ENCODE measurements at regions of chr5 and their contacts with region 1.

Region 1: DNA sequence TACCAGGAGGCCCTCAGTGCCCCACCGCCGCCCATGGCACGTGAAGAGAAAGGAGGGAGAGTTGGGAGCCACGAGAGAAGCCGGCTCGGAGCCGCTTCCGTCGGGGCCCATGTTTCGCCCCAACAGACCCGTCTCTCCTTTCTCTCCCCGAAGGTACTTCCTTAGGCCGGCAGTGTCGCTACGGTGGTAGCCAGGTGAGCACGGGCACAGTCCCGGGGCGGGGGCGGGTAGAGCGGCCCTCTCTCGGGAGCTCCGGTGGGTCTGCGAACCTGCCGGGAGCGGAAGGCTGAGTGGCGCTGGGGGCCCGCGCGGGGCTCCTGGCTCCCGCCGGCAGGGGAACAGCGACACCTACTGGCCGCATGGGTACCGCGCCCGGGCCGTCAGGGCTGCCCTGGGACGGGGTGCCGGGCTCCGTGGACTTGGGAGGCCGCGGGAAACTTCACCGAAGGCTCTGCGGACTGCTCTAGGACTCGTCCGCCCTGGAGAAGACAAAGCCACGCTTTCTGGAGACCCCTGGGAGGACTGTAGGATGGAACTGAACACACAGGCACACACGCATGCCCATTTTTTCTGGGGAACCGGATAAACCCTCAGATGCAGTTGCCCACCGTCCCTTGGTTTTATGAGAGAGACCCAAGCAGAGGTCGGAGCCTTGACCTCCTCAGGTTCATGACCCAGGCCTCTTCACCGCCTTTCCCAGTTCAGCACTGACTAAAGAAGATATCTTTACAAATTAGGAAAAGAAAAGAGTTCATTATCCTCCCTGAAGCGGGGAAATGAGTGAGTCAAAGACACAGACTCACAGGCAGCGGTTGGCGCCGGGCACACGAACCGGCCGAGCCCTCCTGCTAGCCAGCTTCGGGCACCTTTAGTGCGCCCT is 202.5 kb downstream of the MEF2C start:
- DNase-seq: peak; percentile 71 to 80
- ATAC-seq: peak; percentile 86 to 91 (median 88)
- H3K4me3 ChIP-seq: peak overlapping the region; percentile 48
- H3K27ac ChIP-seq: no peak overlapping the region
- H3K4me1 ChIP-seq: peaks cover 11% of the 10 kb centered on the region
- H3K27me3 ChIP-seq: peaks cover 6 to 100% (median 47%) of the 10 kb centered on the region in 3 donors
- CTCF ChIP-seq: peak; percentile 95

Region 2: DNA sequence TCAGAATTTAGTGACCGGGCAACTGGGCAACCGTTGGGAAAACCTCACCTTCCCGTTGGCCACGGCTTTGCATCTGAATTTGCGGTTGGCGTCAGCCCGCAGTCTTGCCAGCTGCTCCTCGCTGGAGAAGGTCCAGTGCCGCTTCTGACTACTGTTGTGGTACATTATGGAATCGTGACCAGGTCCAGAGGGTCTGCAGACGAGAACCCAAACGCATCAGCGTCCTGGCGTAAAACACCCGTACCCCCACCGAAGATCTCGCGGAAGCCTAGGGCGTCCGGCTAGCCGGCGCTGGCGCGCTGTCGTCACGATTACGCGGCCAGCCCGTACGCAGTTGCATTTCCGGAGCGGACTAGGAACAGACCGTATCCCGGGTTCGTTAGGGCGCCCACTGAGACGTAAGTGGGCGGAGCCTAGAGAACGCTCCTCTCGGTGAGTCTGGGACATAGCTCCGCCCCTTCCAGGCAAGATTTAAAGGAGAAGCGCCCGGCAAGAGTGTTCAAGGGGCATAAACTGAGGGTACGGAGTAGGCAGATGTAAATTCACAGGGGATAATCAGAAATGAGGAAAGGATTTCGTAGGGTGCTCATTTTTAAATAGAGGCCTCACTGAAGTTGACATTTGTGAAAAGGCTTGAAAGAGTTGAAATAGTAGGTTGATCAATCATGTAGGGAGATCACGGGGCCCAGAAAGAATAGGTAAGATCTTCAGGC is 1267.7 kb before region 1 on chr5 and contains the start of gene CCNH:
- intact Hi-C with region 1: loop called in 1 of 2 experiments (anchors 10 kb)
- DNase-seq: peak; percentile 98
- ATAC-seq: peak; percentile 97 to 99 (median 98)
- H3K4me3 ChIP-seq: peak within 1 kb of the TSS; percentile 91
- H3K27ac ChIP-seq: peak within 1 kb of the TSS; percentile 98
- H3K4me1 ChIP-seq: peaks cover 20% of the 10 kb centered on the region
- H3K27me3 ChIP-seq: no peaks in the 10 kb centered on the region
- CTCF ChIP-seq: no peak
- total RNA-seq, gene CCNH: 19.9 to 41.9 (median 31.4) TPM

Region 3: DNA sequence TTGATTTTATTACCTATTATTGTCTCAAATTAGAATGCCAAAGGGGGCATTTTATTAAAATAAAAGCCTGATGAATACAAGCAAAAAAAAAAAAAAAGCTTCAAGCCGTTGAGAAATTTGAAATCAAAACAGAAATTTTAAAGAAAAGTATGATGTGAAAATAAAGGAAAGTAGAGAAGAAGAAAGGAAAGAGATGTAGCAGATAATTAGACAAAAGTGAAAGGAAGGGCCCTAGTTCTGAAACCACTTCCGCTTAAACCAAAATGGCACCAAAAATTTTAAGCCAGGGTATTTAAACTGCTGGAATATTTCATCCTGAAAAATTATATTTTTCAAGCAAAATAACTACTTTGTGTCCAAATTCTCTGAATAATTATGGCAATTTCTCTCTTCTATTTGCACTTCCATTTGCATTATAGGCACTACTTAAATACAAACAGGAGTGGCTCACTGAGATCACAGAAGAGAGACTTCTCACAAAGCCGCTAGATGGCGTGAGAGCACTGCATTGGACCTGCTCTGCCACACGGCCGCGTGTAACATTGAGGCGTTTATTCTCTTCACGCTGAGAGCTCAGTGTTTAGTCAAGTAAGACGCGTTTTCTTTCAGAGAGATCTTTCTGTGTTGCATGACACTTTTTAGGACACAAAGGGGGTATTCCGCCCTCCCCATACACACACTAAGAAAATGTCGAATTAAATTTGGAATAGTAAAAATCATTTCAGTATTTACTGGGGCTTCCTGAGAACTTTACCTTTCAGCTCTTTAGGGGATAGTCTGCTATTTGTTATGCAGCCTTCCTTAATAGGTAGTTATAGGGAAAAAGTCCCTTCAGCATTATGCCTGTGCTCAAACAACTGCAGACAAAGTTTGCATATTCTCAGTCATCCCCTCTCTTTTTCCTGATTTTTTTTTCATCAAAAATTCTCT is 899.4 kb before region 1 on chr5:
- intact Hi-C with region 1: loop called (anchors 2 to 5 kb)
- DNase-seq: peak; percentile 62 to 87
- ATAC-seq: peak; percentile 87 to 99 (median 93)
- H3K4me3 ChIP-seq: no peak overlapping the region
- H3K27ac ChIP-seq: no peak overlapping the region
- H3K4me1 ChIP-seq: no peaks in the 10 kb centered on the region
- H3K27me3 ChIP-seq: peaks cover 0 to 12% (median 0%) of the 10 kb centered on the region in 3 donors
- CTCF ChIP-seq: peak; percentile 94

Region 4: DNA sequence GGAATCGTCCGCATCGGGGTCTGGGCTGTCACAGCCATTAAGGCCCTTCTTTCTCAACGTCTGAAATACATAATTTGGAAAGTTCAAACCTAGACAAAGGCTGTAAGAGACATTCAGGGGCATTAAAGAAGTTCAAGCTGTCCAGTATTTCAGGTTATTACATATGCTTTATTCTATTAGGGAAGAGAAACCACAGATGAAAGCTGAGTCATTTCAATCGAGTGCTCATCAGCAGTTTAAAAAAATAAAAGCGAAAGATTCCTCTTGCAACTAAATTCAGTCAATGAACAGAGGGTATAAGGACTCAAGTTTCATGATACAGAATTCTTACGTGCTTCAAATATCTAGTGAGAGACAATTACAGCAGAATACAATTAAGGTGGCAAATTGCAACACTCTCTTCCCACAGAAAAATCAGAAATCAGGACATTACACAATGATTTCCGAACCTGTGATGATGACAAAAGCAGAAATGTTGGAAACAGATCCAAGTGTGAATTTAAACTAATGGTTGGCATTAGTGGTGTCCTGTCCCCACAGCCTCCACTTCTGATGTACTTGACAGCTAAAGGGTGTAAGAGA is 80.9 kb after region 1 on chr5:
- intact Hi-C with region 1: no loop called
- DNase-seq: no peak
- ATAC-seq: peak in 3 of 4 donors; percentile 18 to 35 (median 29)
- H3K4me3 ChIP-seq: no peak overlapping the region
- H3K27ac ChIP-seq: peak overlapping the region; percentile 75
- H3K4me1 ChIP-seq: peaks cover 30% of the 10 kb centered on the region
- H3K27me3 ChIP-seq: no peaks in the 10 kb centered on the region
- CTCF ChIP-seq: no peak

Measured in psoas muscle (tissue), 8 donors.